ENCODE measurements at regions of chr15 and their contacts with region 1.

Region 1: DNA sequence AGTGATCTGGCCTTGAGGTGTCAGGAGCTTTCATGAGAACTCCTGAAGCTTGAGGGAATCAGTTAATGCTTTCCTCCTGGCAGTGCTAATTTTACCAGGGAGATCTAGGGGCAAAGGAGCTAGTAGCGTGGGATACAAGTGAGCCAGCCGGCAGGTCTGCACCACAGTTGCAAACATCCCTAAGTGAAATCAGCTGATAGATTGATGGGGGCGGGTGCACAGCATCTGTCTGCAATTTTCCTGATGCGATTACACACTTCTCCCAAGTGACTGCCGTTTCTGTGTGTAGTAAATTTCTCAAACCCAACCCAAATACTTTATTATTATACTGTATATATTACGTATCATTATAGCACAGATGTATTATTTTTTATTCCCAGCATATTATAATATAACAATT is 304.5 kb downstream of the AGBL1 start:
- DNase-seq: no peak
- H3K4me3 ChIP-seq: no peak overlapping the region
- H3K27ac ChIP-seq: no peak overlapping the region
- H3K4me1 ChIP-seq: no peaks in the 10 kb centered on the region
- CTCF ChIP-seq: no peak

Region 2: GRCh38 chr15:86444527-86444926 is 60.3 kb after region 1 on chr15:
- CTCF ChIA-PET with region 1: no interaction called
- POLR2A ChIA-PET with region 1: no interaction called
- intact Hi-C with region 1: loop called (anchors 10 kb)
- DNase-seq: no peak
- H3K4me3 ChIP-seq: no peak overlapping the region
- H3K27ac ChIP-seq: no peak overlapping the region
- H3K4me1 ChIP-seq: no peaks in the 10 kb centered on the region
- CTCF ChIP-seq: no peak

Region 3: DNA sequence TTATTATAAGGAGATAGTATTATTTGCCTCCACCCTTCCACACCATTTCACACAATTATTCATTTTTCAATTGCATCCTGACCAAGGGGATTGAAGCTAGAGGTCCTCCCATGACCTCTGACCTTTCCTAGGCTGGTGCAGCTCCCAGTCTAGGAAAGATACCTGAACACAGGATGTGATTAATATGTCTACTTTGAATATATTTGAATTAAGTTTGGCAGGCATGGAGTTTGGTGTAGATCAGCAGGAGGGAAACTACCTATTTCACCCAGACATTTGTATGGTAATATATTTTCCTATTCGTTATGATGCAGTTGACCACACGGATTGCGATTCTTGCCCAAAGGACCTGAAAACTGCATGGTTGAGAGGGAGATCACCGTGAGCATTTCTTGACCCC is 291.8 kb after region 1 on chr15:
- CTCF ChIA-PET with region 1: no interaction called
- POLR2A ChIA-PET with region 1: no interaction called
- intact Hi-C with region 1: no loop called
- DNase-seq: no peak
- H3K4me3 ChIP-seq: no peak overlapping the region
- H3K27ac ChIP-seq: no peak overlapping the region
- H3K4me1 ChIP-seq: no peaks in the 10 kb centered on the region
- CTCF ChIP-seq: no peak

Region 4: DNA sequence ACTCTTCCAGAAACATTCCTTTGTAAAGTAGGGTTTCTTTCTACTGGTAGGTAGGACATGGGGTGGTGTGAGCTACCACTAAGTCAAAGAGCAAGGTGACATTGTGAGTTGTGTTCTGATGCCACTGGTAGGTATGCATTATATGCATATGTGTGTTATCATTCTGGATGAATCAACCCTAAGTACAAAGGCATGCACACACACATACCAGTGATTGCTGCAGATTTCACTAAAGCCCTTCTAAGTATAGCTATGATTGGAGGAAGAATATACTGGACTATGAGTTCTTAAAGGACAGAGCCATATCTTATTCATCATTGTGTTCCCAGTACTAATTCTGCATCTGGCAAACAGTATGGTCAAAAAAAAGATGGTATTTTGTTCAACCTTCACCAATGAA is 341.4 kb after region 1 on chr15:
- CTCF ChIA-PET with region 1: no interaction called
- POLR2A ChIA-PET with region 1: no interaction called
- intact Hi-C with region 1: no loop called
- DNase-seq: no peak
- H3K4me3 ChIP-seq: no peak overlapping the region
- H3K27ac ChIP-seq: no peak overlapping the region
- H3K4me1 ChIP-seq: no peaks in the 10 kb centered on the region
- CTCF ChIP-seq: no peak